SK-N-SH (cell line): ENCODE measurements at regions of chr12 and their contacts with region 1.

Region 1: GRCh38 chr12:113912760-113913329 is 53.3 kb downstream of the RBM19 start:
- DNase-seq: peak; percentile 82
- H3K4me3 ChIP-seq: no peak overlapping the region
- H3K27ac ChIP-seq: no peak overlapping the region
- H3K4me1 ChIP-seq: no peaks in the 10 kb centered on the region
- H3K27me3 ChIP-seq: no peaks in the 10 kb centered on the region
- CTCF ChIP-seq: peak; percentile 97
- EP300 ChIP-seq: no peak
- RAD21 ChIP-seq: peak; percentile 97

Region 2: DNA sequence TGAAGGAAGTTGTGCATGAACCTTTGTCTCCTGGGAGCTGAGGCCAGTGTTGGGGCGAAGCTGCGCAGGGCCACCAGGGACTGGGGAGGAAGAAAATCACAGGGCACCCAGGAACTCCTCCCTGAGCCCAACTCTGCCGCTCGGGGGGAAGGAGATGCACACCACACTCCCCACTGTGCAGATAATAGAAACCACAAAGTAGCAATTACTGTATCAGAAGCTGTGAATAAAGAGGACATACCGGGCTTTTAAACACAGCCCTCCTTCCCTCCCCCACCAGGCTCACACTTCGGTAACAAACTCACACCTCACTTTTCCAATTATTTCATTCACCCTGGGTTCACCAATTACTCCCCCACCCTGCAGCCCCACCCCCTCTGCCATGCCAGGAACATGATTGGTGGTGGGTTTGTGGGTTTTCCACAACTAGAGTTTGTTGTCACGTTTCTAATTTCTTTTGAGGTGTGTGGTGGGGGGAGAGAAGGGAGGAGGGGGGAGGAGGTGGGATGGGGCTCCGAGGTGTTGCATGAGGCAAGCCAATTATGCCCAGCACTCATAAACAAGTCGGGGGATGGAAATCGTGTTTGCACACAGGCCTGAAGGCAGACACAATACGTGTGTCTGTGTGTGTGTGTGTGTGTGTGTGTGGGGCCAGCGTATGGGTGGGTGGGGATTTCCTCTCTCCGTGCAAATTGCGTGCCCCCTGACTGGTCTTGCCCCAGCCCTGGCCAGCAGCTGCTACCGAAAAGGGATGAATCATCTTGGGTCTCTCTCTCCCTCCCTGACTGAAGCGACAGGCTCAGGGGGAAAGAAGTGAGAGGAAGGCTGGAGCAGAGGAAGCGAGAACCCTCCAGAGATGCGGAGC is 50.0 kb before region 1 on chr12:
- CTCF ChIA-PET with region 1: interaction called, 39 read pairs
- POLR2A ChIA-PET with region 1: no interaction called
- DNase-seq: no peak
- H3K4me3 ChIP-seq: no peak overlapping the region
- H3K27ac ChIP-seq: no peak overlapping the region
- H3K4me1 ChIP-seq: no peaks in the 10 kb centered on the region; a peak in 1 of 4 replicates
- H3K27me3 ChIP-seq: no peaks in the 10 kb centered on the region
- CTCF ChIP-seq: no peak
- EP300 ChIP-seq: no peak
- RAD21 ChIP-seq: no peak

Region 3: DNA sequence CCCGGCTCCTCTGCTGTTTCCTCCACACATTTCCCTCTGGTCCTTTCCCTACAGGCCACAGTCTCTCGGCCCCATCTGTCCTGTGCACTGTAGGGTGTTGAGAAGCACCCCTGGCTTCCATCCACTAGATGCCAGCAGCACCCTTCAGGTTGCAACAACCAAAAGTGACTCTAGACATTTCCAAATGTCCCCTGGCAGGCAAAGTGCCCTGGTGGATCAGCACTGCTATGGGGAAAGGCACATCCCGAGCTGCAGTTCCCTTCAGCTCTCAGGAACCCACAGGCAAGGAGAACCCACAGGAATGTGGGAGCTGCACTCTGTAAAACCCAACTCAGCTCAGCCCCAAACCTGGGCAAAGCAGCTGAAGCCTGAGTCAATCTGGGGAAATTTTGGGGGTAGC is 23.8 kb before region 1 on chr12:
- CTCF ChIA-PET with region 1: interaction called, 39 read pairs
- POLR2A ChIA-PET with region 1: no interaction called
- DNase-seq: peak; percentile 45
- H3K4me3 ChIP-seq: no peak overlapping the region
- H3K27ac ChIP-seq: no peak overlapping the region
- H3K4me1 ChIP-seq: peaks cover 0 to 18% of the 10 kb centered on the region in 2 experiments; a peak in 2 of 4 replicates
- H3K27me3 ChIP-seq: no peaks in the 10 kb centered on the region
- CTCF ChIP-seq: no peak
- EP300 ChIP-seq: no peak
- RAD21 ChIP-seq: peak; percentile 57